Psoas muscle (tissue), 8 donors: ENCODE measurements at regions of chr10 and their contacts with region 1.

Region 1: GRCh38 chr10:124092860-124093773 is at the start of gene CHST15:
- DNase-seq: peak; percentile 58 to 75
- ATAC-seq: peak; percentile 41 to 55 (median 52)
- H3K4me3 ChIP-seq: peak within 1 kb of the TSS; percentile 79
- H3K27ac ChIP-seq: peak within 1 kb of the TSS; percentile 80
- H3K4me1 ChIP-seq: peaks cover 32% of the 10 kb centered on the region
- H3K27me3 ChIP-seq: peaks cover 0 to 4% (median 0%) of the 10 kb centered on the region in 3 donors
- CTCF ChIP-seq: peak; percentile 19
- total RNA-seq, gene CHST15: 3.6 to 39.2 (median 12.1) TPM

Region 2: GRCh38 chr10:123800289-123800688 is 292.8 kb before region 1 on chr10:
- intact Hi-C with region 1: no loop called
- DNase-seq: no peak
- ATAC-seq: no peak
- H3K4me3 ChIP-seq: no peak overlapping the region
- H3K27ac ChIP-seq: no peak overlapping the region
- H3K4me1 ChIP-seq: no peaks in the 10 kb centered on the region
- H3K27me3 ChIP-seq: peaks cover 0 to 7% (median 0%) of the 10 kb centered on the region in 3 donors
- CTCF ChIP-seq: no peak

Region 3: DNA sequence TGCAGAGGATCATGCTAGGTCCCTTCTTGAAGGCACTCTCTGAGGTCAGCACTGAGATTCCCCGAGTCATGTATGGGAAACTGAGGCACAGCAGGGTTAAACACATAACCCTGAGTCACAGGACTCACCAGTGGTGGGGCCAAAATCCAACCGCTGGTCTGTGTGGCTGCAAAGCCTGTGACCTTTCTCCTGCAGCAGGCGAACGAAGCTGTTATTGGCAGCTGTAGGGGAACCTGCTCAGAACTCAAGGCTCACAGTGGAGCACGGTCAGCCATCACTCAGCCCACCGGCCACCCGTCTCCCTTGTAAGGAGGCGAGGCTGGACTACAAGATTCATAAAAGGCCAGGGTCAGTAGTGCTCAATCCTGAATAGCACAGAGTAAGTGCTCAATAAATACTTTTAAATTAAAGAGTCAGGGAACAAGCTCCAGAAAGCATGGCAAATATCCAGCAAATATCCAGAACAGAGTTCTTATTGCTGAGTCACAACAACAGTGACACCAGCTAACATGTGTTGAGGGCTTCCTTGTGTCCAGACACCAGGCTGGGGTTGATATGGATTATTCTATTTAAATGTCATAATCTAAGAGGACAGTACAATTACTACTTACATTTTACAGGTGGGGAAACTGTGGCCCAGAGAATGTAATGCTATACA is 34.6 kb before region 1 on chr10:
- intact Hi-C with region 1: loop called in 1 of 2 experiments (anchors 5 kb)
- DNase-seq: no peak
- ATAC-seq: no peak
- H3K4me3 ChIP-seq: no peak overlapping the region
- H3K27ac ChIP-seq: no peak overlapping the region
- H3K4me1 ChIP-seq: peaks cover 7% of the 10 kb centered on the region
- H3K27me3 ChIP-seq: no peaks in the 10 kb centered on the region
- CTCF ChIP-seq: no peak

Region 4: GRCh38 chr10:124152916-124153826 is 60.1 kb after region 1 on chr10:
- intact Hi-C with region 1: loop called in 1 of 2 experiments (anchors 5 kb)
- DNase-seq: peak; percentile 51 to 67
- ATAC-seq: peak; percentile 73 to 82 (median 76)
- H3K4me3 ChIP-seq: no peak overlapping the region
- H3K27ac ChIP-seq: peak overlapping the region; percentile 81
- H3K4me1 ChIP-seq: peaks cover 45% of the 10 kb centered on the region
- H3K27me3 ChIP-seq: no peaks in the 10 kb centered on the region
- CTCF ChIP-seq: no peak

Region 5: GRCh38 chr10:124197371-124198124 is 104.4 kb after region 1 on chr10:
- intact Hi-C with region 1: loop called in 1 of 2 experiments (anchors 5 kb)
- DNase-seq: no peak
- ATAC-seq: peak; percentile 68 to 93 (median 86)
- H3K4me3 ChIP-seq: no peak overlapping the region
- H3K27ac ChIP-seq: peak overlapping the region; percentile 53
- H3K4me1 ChIP-seq: peaks cover 9% of the 10 kb centered on the region
- H3K27me3 ChIP-seq: no peaks in the 10 kb centered on the region
- CTCF ChIP-seq: no peak

Region 6: GRCh38 chr10:124975977-124976514 is 882.9 kb after region 1 on chr10:
- intact Hi-C with region 1: no loop called
- DNase-seq: no peak
- ATAC-seq: peak in 1 of 4 donors; percentile 27
- H3K4me3 ChIP-seq: no peak overlapping the region
- H3K27ac ChIP-seq: no peak overlapping the region
- H3K4me1 ChIP-seq: peaks cover 16% of the 10 kb centered on the region
- H3K27me3 ChIP-seq: no peaks in the 10 kb centered on the region
- CTCF ChIP-seq: no peak